ENCODE measurements at regions of chr19 and their contacts with region 1.

Region 1: DNA sequence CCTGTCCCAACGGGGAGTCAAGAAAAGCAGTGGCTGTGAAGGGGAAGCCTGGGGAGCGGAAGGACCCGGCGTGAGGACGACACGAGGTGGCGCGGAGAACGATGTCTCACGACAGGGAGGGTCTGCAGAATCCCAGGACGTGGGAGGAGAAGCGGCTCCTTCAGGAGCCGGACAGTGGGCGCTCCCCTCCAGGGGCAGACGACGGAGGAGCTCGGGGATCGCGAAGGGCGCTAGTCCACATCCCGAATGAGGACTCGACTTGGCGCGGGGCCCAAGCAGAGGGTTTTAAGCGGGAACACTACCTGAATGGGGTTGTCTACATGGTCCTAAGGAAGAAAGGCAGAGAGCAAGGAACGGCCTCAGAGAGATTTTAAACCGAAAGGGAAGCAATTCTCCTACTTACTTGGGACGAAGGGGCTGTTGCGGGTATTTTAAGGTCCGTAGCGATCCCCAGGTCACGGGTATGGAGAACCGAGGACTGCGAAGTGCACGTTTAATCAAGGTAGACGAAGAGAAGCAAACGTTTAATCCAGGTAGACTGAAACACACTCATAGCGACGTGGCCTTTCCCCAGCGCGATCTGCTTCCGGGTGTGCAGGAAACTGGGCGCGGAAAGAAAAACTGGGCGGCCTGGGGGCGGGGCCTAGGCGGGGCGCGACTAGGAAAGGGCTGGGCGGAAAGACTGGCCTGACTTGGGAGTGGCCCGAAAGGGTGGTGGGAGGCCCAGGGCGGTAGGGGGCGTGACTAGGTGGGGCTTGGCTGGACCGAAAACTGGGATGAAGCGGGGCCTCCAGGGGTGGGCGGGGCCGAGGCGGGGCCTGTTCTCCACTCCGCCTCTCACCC is at the start of gene ZNF841:
- DNase-seq: peak; percentile 86
- ATAC-seq: peak; percentile 98
- H3K4me3 Mint-ChIP-seq: peak within 1 kb of the TSS; percentile 98
- H3K27ac Mint-ChIP-seq: peak within 1 kb of the TSS; percentile 94
- H3K4me1 Mint-ChIP-seq: peaks cover 30% of the 10 kb centered on the region
- H3K27me3 Mint-ChIP-seq: no peaks in the 10 kb centered on the region
- CTCF ChIP-seq: no peak
- total RNA-seq, gene ZNF841: 34.7 and 42.7 TPM in 2 replicates

Region 2: DNA sequence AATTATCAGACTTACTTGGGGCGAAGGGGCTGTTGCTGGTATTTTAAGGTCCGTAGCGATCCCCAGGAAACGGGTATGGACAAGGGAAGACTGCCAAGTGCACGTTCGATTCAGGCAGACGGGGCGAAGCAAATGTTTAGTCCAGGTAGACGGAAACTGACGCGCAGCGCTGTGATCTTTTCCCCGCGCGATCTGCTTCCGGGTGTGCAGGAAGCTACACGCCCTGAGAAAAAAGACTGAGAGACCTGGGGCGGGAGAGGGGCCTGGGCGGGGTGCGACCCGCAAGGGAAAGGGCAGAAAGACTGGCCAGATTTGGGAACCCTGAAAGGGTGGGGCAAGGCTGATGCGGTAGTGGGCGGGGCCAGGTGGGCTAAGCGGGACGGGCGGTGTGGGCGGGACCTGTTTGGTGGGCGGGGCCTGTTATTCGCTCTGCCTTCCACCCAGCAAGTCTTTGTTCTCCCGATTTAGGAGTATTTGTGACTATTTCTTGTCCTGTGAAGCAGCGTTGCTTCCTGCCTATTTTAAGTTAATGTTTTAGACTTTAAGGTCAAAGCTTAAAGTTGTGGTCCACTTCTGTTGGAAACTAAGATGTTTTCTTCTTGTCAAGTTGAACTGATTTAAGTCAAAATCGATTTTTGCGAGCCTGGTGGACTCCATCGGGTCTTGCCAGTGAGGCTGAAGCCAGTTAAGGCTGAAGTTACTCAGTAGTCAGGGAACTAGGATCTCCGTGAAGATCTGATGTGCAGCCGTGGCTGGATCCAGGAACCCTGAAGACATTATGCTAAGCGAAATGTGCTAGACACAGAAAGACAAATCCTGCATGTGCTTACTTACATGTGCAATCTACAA is 76.2 kb after region 1 on chr19 and contains the start of gene ZNF836:
- CTCF ChIA-PET with region 1: no interaction called
- POLR2A ChIA-PET with region 1: interaction called, 6 read pairs
- intact Hi-C with region 1: loop called (anchors 1 kb)
- DNase-seq: peak; percentile 80
- ATAC-seq: peak; percentile 97
- H3K4me3 Mint-ChIP-seq: peak within 1 kb of the TSS; percentile 97
- H3K27ac Mint-ChIP-seq: peak within 1 kb of the TSS; percentile 96
- H3K4me1 Mint-ChIP-seq: peaks cover 27% of the 10 kb centered on the region
- H3K27me3 Mint-ChIP-seq: no peaks in the 10 kb centered on the region
- CTCF ChIP-seq: no peak
- total RNA-seq, gene ZNF836: 27.4 and 28.0 TPM in 2 replicates

Region 3: GRCh38 chr19:52397310-52398080 is 302.1 kb after region 1 on chr19 and contains the start of gene ZNF528:
- CTCF ChIA-PET with region 1: no interaction called
- POLR2A ChIA-PET with region 1: no interaction called
- intact Hi-C with region 1: loop called (anchors 10 kb)
- DNase-seq: peak; percentile 91
- ATAC-seq: peak; percentile 99
- H3K4me3 Mint-ChIP-seq: peak within 1 kb of the TSS; percentile 90
- H3K27ac Mint-ChIP-seq: peak within 1 kb of the TSS; percentile 91
- H3K4me1 Mint-ChIP-seq: peaks cover 18% of the 10 kb centered on the region
- H3K27me3 Mint-ChIP-seq: no peaks in the 10 kb centered on the region
- CTCF ChIP-seq: no peak
- total RNA-seq, gene ZNF528: 29.8 and 40.3 TPM in 2 replicates